GM12878 (cell line): ENCODE measurements at regions of chr17 and their contacts with region 1.

Region 1: DNA sequence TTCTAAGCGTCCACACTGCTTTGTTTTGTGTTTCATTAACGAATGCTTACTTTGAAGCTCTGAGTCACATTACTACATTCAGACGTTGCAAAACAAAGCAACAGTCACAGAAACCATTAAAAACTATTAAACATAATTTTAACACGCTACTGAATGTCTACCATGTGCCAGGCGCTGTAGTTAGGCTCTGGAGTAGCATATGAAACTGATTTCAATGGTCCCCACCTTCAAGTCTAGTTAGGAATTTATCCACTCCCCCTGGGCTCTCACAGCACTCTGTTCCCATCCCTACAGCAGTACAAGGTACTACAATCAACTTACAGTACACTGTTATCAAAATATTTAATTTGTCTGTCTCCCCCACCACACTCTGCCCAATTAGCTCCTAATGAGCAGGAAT is 631 bp downstream of the UTP6 start:
- DNase-seq: no peak
- ATAC-seq: peak; percentile 39
- H3K4me3 ChIP-seq: peak overlapping the region; percentile 72
- H3K27ac ChIP-seq: peak overlapping the region; percentile 74
- H3K4me1 ChIP-seq: peaks cover 6% of the 10 kb centered on the region
- H3K27me3 ChIP-seq: no peaks in the 10 kb centered on the region
- CTCF ChIP-seq: no peak
- EP300 ChIP-seq: no peak
- POLR2A ChIP-seq: no peak
- RAD21 ChIP-seq: no peak

Region 2: GRCh38 chr17:31811101-31811500 is 89.8 kb before region 1 on chr17:
- CTCF ChIA-PET with region 1: no interaction called
- POLR2A ChIA-PET with region 1: no interaction called
- RAD21 ChIA-PET with region 1: no interaction called
- SMC1A ChIA-PET with region 1: no interaction called
- in situ Hi-C with region 1: no loop called
- intact Hi-C with region 1: no loop called
- DNase-seq: no peak
- ATAC-seq: no peak
- H3K4me3 ChIP-seq: no peak overlapping the region
- H3K27ac ChIP-seq: no peak overlapping the region
- H3K4me1 ChIP-seq: no peaks in the 10 kb centered on the region
- H3K27me3 ChIP-seq: no peaks in the 10 kb centered on the region; a peak in 2 of 4 replicates
- CTCF ChIP-seq: no peak
- EP300 ChIP-seq: no peak
- POLR2A ChIP-seq: no peak
- RAD21 ChIP-seq: no peak

Region 3: DNA sequence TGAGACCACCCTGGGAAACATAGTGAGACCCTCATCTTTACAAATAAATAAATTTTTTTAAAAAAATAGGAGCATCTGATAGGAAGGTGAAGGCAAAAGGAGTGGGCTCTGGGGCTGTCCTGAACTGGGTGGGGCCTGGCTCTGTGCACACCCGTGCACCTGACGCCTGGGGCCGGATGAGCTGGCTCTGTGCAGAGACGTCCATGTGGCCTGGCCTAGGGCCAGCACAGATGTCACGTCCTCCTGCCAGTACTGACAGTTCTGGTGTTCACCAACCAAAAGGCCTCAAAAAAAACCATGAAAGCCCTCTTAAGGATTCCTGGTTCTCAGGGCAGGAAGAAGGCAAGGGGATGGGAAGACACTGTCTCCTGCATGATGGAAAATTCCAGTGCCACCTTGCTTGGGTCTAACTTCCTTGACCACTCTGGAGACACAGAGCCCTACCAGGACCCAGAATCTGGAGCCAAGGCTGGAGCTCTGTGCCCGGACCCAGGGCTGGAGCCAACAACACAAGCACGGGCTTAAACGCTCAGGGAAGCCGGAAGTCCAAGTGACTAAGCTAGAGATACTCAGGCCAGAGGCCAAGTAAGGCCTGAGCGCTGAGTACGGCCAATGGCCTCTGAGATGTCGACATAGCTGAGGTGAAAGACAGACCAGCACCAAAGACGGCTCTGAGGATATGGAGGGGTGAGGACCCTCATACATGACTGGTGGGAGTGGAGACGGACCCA is 74.8 kb before region 1 on chr17:
- CTCF ChIA-PET with region 1: no interaction called
- POLR2A ChIA-PET with region 1: no interaction called
- RAD21 ChIA-PET with region 1: no interaction called
- SMC1A ChIA-PET with region 1: no interaction called
- in situ Hi-C with region 1: no loop called
- intact Hi-C with region 1: no loop called
- DNase-seq: no peak
- ATAC-seq: 0 out of 3 replicates have a peak, but pooled peaks have one; percentile 27
- H3K4me3 ChIP-seq: no peak overlapping the region
- H3K27ac ChIP-seq: no peak overlapping the region
- H3K4me1 ChIP-seq: no peaks in the 10 kb centered on the region
- H3K27me3 ChIP-seq: no peaks in the 10 kb centered on the region
- CTCF ChIP-seq: no peak
- EP300 ChIP-seq: no peak
- POLR2A ChIP-seq: no peak
- RAD21 ChIP-seq: no peak

Region 4: GRCh38 chr17:31858642-31859473 is 42.0 kb before region 1 on chr17 and contains the start of gene COPRS:
- CTCF ChIA-PET with region 1: interaction called, 5 read pairs
- POLR2A ChIA-PET with region 1: no interaction called
- RAD21 ChIA-PET with region 1: interaction called, 12 read pairs
- SMC1A ChIA-PET with region 1: interaction called, 7 read pairs
- in situ Hi-C with region 1: no loop called
- intact Hi-C with region 1: no loop called
- DNase-seq: no peak
- ATAC-seq: peak; percentile 94
- H3K4me3 ChIP-seq: peak within 1 kb of the TSS; percentile 74
- H3K27ac ChIP-seq: no peak within 1 kb of the TSS
- H3K4me1 ChIP-seq: peaks cover 7% of the 10 kb centered on the region; the same call in 1 of the 2 replicates
- H3K27me3 ChIP-seq: no peaks in the 10 kb centered on the region
- CTCF ChIP-seq: peak in 1 of 3 experiments; percentile 18; a peak in 1 of 6 replicates
- EP300 ChIP-seq: no peak
- POLR2A ChIP-seq: peak; percentile 49; the same call in 1 of the 2 replicates
- RAD21 ChIP-seq: no peak
- polyA plus RNA-seq, gene COPRS: 6.3 to 15.9 TPM

Region 5: DNA sequence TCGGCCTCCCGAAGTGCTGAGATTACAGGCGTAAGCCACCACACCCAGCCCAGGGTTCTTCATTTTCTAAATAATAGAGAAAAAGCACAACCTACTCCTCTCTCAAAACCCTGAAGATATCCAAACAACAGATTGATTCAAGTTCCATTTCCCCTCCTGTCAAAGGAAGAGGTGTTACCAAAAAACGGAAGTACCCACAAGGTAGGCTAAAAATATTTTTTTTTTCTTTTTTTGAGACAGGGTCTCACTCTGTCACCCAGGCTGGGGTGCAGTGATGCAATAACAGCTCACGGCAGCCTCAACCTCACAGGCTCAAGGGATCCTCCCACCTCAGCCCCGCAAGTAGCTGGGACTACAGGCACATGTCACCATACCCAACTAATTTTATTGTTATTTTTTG is 18.3 kb before region 1 on chr17:
- CTCF ChIA-PET with region 1: interaction called, 32 read pairs
- POLR2A ChIA-PET with region 1: interaction called, 3 read pairs
- RAD21 ChIA-PET with region 1: interaction called, 4 read pairs
- SMC1A ChIA-PET with region 1: interaction called, 11 read pairs
- in situ Hi-C with region 1: no loop called
- intact Hi-C with region 1: no loop called
- DNase-seq: no peak
- ATAC-seq: peak; percentile 40; the same call in 2 of the 3 replicates
- H3K4me3 ChIP-seq: no peak overlapping the region
- H3K27ac ChIP-seq: no peak overlapping the region
- H3K4me1 ChIP-seq: no peaks in the 10 kb centered on the region; the same call in 1 of the 2 replicates
- H3K27me3 ChIP-seq: no peaks in the 10 kb centered on the region
- CTCF ChIP-seq: no peak
- EP300 ChIP-seq: no peak
- POLR2A ChIP-seq: no peak
- RAD21 ChIP-seq: no peak

Region 6: GRCh38 chr17:31888124-31888523 is 12.8 kb before region 1 on chr17:
- CTCF ChIA-PET with region 1: interaction called, 32 read pairs
- POLR2A ChIA-PET with region 1: interaction called, 5 read pairs
- RAD21 ChIA-PET with region 1: interaction called, 18 read pairs
- SMC1A ChIA-PET with region 1: interaction called, 23 read pairs
- in situ Hi-C with region 1: no loop called
- intact Hi-C with region 1: no loop called
- DNase-seq: no peak
- ATAC-seq: peak; percentile 44
- H3K4me3 ChIP-seq: peak overlapping the region; percentile 1; the same call in 1 of the 2 replicates
- H3K27ac ChIP-seq: peak overlapping the region; percentile 47; the same call in 1 of the 2 replicates
- H3K4me1 ChIP-seq: peaks cover 21% of the 10 kb centered on the region
- H3K27me3 ChIP-seq: no peaks in the 10 kb centered on the region
- CTCF ChIP-seq: no peak
- EP300 ChIP-seq: no peak
- POLR2A ChIP-seq: no peak
- RAD21 ChIP-seq: no peak

Region 7: DNA sequence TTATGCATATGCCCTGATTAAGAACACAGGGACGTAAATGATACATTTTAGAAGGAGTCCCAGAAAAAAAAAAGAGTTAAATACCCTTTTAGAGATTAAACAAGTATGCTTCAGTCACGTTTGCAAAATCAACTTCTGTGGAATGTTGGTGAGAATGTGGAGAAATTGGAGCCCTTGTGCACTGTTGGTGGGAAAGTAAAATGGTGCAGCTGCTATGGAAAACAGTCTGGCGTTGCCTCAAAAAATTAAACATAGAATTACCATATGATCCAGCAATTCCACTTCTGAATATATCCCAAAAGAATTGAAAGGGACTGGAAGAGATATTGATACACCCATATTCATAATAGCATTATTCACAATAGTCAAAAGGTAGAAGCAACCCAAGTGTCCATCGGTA is 391.2 kb after region 1 on chr17:
- CTCF ChIA-PET with region 1: no interaction called
- POLR2A ChIA-PET with region 1: no interaction called
- RAD21 ChIA-PET with region 1: no interaction called
- SMC1A ChIA-PET with region 1: no interaction called
- in situ Hi-C with region 1: no loop called
- intact Hi-C with region 1: no loop called
- DNase-seq: no peak
- ATAC-seq: no peak
- H3K4me3 ChIP-seq: no peak overlapping the region
- H3K27ac ChIP-seq: no peak overlapping the region
- H3K4me1 ChIP-seq: peaks cover 7% of the 10 kb centered on the region
- H3K27me3 ChIP-seq: 0 out of 4 replicates have a peak, but pooled peaks cover 0 to 2% of the 10 kb centered on the region in 2 experiments
- CTCF ChIP-seq: no peak
- EP300 ChIP-seq: no peak
- POLR2A ChIP-seq: no peak
- RAD21 ChIP-seq: no peak